Heart right ventricle (tissue), 16 donors: ENCODE measurements at regions of chr6 and their contacts with region 1.

Region 1: DNA sequence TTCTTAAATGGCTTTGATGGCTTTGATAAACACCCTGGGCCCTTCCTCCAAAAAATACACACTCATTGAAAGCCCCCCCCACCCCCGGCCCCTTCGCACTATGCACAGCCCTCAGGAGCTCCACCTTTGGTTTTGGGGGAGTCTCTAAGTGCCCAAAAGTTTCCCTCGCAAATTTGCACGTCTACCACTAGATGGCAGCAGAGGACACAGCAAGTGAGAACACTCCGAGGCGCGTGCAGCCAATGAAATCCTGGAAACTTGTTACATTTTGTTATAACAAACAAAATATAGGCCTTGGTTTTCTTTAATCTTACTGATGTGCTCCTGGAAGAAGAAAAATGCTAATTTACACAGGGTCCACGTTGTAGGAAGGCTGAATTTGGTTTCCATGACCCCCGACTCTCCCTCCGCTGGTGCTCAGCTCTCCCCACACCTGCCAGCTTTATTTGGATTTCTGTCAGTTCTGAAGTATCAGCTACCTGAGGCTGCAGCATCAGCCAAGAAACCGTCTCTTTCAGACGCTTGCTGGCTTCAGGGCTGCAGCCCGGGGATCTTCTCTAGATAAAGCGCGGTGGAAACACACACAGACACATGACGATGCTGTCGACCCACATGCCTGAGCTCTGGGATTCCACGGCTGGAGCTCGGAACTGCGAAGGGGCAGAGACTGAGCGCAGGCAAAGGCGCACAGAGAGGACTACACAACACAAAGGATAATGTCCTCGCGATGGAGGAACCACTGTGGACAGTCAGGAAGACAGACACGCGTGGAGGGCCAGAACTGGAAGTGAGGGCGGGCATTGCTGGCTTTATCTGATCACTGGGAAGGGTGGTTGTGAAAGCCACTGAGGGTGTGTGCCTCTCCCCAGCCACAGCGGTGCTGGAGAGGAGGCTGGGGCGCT is 148.4 kb upstream of the RPS6KA2 start:
- DNase-seq: peak in 1 of 2 donors; percentile 56
- ATAC-seq: peak; percentile 33 to 73 (median 53)
- H3K4me3 ChIP-seq: no peak overlapping the region
- H3K27ac ChIP-seq: no peak overlapping the region
- H3K4me1 ChIP-seq: peaks cover 0 to 6% (median 0%) of the 10 kb centered on the region in 9 donors
- H3K27me3 ChIP-seq: peaks cover 0 to 30% (median 9%) of the 10 kb centered on the region in 7 donors
- CTCF ChIP-seq: peak; percentile 76 to 89 (median 83)

Region 2: GRCh38 chr6:166456395-166457156 is 318.9 kb before region 1 on chr6:
- intact Hi-C with region 1: loop called in 1 of 10 experiments (anchors 10 kb)
- DNase-seq: no peak
- ATAC-seq: peak in 6 of 8 donors; percentile 32 to 63 (median 44)
- H3K4me3 ChIP-seq: no peak overlapping the region
- H3K27ac ChIP-seq: peak overlapping the region in 6 of 10 donors; percentile 2 to 67 (median 56)
- H3K4me1 ChIP-seq: peaks cover 0 to 34% (median 10%) of the 10 kb centered on the region in 9 donors
- H3K27me3 ChIP-seq: no peaks in the 10 kb centered on the region
- CTCF ChIP-seq: peak in 4 of 9 donors; percentile 20 to 55 (median 42)

Region 3: DNA sequence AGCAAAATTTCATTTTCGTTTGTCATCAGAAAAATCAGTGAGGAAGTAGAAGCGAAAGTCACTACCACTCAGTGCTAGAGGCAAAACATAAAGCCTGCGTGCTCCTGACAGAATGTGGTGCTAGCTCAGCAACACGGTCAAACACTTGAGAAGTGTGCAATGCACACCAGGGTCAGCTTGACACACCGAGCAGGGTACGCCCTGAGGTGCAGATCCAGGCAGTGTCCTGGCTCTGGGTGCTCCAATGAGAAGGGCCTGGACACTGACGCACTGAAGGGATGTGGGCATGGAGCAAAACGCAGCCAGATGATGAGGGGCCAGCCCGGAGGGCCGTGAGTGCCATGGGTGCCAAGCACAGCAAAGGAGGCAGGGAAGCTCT is 175.0 kb after region 1 on chr6:
- intact Hi-C with region 1: loop called in 4 of 10 experiments (anchors 5 to 10 kb)
- DNase-seq: no peak
- ATAC-seq: peak; percentile 4 to 61 (median 23)
- H3K4me3 ChIP-seq: peak overlapping the region in 4 of 10 donors; percentile 39 to 54 (median 48)
- H3K27ac ChIP-seq: peak overlapping the region in 9 of 10 donors; percentile 67 to 89 (median 78)
- H3K4me1 ChIP-seq: peaks cover 0 to 54% (median 6%) of the 10 kb centered on the region in 9 donors
- H3K27me3 ChIP-seq: no peaks in the 10 kb centered on the region
- CTCF ChIP-seq: no peak

Region 4: GRCh38 chr6:166989427-166990032 is 214.1 kb after region 1 on chr6:
- intact Hi-C with region 1: loop called in 4 of 10 experiments (anchors 5 to 10 kb)
- DNase-seq: peak in 1 of 2 donors; percentile 35
- ATAC-seq: peak in 2 of 8 donors; percentile 29 to 39
- H3K4me3 ChIP-seq: no peak overlapping the region
- H3K27ac ChIP-seq: no peak overlapping the region
- H3K4me1 ChIP-seq: no peaks in the 10 kb centered on the region
- H3K27me3 ChIP-seq: no peaks in the 10 kb centered on the region
- CTCF ChIP-seq: peak in 8 of 9 donors; percentile 28 to 69 (median 50)

Region 5: GRCh38 chr6:167141667-167142432 is 366.4 kb after region 1 on chr6:
- intact Hi-C with region 1: loop called in 7 of 10 experiments (anchors 2 to 10 kb)
- DNase-seq: peak; percentile 18 to 56
- ATAC-seq: peak; percentile 71 to 91 (median 86)
- H3K4me3 ChIP-seq: no peak overlapping the region
- H3K27ac ChIP-seq: no peak overlapping the region
- H3K4me1 ChIP-seq: peaks cover 0 to 5% (median 0%) of the 10 kb centered on the region in 9 donors
- H3K27me3 ChIP-seq: peaks cover 0 to 69% (median 54%) of the 10 kb centered on the region in 7 donors
- CTCF ChIP-seq: peak; percentile 50 to 82 (median 76)